ENCODE measurements at regions of chr2 and their contacts with region 1.

Region 1: DNA sequence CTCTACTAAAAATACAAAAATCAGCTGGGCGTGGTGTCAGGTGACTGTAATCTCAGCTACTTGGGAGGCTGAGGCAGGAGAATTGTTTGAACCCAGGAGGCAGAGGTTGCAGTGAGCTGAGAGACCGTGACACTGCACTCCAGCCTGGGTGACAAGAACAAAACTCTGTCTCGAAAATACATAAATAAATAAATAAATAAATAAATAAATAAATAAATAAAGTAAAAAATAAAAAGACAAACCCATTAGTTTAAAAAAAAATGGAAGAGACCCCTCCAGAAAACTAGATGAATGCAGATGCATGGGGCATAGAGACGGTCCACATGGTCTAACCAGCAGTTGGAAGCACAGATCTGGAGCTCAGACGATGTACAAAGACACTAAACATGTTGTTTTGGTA is 18.1 kb downstream of the TMEM163 start:
- DNase-seq: no peak
- H3K4me3 ChIP-seq: no peak overlapping the region
- H3K27ac ChIP-seq: no peak overlapping the region
- H3K4me1 ChIP-seq: no peaks in the 10 kb centered on the region
- H3K27me3 ChIP-seq: no peaks in the 10 kb centered on the region
- CTCF ChIP-seq: no peak
- POLR2A ChIP-seq: no peak

Region 2: DNA sequence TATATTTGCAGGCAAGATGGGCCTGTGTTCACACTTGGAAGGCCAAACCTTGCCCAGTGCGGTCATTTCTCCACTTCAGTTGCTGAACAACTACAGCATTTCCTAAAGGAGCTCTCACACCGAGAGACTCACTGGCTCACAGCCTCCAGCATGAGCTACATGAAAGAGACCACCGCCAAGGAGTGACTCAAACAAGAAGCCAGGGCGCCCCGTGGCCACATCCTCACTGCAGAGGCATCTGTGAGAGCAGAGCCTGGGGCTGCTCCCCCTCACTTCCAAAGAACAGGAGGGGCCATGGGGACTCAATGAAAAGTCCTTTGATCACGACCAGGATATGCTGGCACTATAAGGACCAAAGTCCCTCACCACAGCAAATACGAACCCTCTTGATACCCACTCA is 31.9 kb before region 1 on chr2:
- intact Hi-C with region 1: loop called (anchors 1 kb)
- DNase-seq: peak in 1 of 2 donors; percentile 24
- H3K4me3 ChIP-seq: no peak overlapping the region
- H3K27ac ChIP-seq: no peak overlapping the region
- H3K4me1 ChIP-seq: no peaks in the 10 kb centered on the region
- H3K27me3 ChIP-seq: no peaks in the 10 kb centered on the region
- CTCF ChIP-seq: no peak
- POLR2A ChIP-seq: no peak

Measured in breast epithelium (tissue), 4 donors.